Sciatic nerve (tissue), 2 donors: ENCODE measurements at regions of chr14 and their contacts with region 1.

Region 1: GRCh38 chr14:87076151-87076550 is 916.8 kb downstream of the GALC start:
- DNase-seq: no peak
- ATAC-seq: no peak

Region 2: GRCh38 chr14:87041290-87042020 is 34.7 kb before region 1 on chr14:
- intact Hi-C with region 1: loop called (anchors 2 kb)
- DNase-seq: no peak
- ATAC-seq: no peak